Endothelial cell of umbilical vein (primary cell): ENCODE measurements at regions of chr17 and their contacts with region 1.

Region 1: DNA sequence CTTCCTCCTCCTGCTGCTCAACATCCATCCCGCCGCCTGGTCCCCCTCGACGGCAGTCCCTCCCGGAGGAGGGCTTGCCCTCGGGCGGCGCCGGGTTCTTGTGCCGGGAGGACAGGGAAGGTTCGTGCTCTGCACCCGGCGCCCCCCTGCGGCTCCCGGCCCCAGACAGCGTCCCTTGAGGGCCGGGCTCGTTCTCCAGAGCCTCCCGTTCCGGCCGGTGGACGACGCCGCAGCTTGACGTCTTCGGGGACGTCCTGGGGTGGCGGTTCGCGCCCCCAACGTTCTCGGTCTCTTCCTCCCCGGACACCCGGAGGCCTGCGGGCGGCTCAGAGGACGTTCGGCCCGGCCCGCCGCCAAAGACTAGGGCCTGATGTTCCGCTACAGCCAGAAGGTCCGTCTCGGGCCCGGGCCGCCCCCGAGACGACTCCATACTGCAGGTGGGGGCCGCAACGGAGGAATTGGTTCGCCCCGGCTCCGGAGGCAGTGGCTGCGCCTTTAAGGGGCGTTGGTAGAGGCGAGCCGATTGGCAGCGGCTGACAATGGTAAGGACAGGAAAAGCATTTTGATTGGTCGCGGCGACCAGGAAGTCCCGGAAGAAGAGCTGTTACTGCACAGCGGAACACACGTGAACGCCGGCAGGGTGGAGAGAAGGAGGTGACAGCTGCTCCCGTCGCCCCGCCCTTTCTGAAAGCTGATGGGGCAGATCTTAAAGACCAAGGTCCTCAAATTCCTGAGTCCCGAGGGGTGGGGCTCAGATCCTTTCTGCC is at the start of gene BORCS6:
- DNase-seq: peak; percentile 98
- H3K4me3 ChIP-seq: peak within 1 kb of the TSS; percentile 45 to 66 (median 49)
- H3K27ac ChIP-seq: peak within 1 kb of the TSS; percentile 65
- H3K4me1 ChIP-seq: peaks cover 27% of the 10 kb centered on the region
- H3K27me3 ChIP-seq: no peaks in the 10 kb centered on the region
- CTCF ChIP-seq: peak in 1 of 2 donors; percentile 5
- POLR2A ChIP-seq: no peak
- total RNA-seq, gene BORCS6: 8.3 and 9.0 TPM in 2 replicates

Region 2: GRCh38 chr17:8138672-8139371 is 51.1 kb before region 1 on chr17:
- CTCF ChIA-PET with region 1: interaction called, 3 read pairs
- POLR2A ChIA-PET with region 1: no interaction called
- dilution Hi-C with region 1: no loop called
- intact Hi-C with region 1: loop called (anchors 1 kb)
- DNase-seq: peak; percentile 98
- H3K4me3 ChIP-seq: peak overlapping the region; percentile 26 to 89 (median 80)
- H3K27ac ChIP-seq: peak overlapping the region; percentile 88
- H3K4me1 ChIP-seq: peaks cover 14% of the 10 kb centered on the region
- H3K27me3 ChIP-seq: no peaks in the 10 kb centered on the region
- CTCF ChIP-seq: peak; percentile 83 to 91
- POLR2A ChIP-seq: no peak

Region 3: DNA sequence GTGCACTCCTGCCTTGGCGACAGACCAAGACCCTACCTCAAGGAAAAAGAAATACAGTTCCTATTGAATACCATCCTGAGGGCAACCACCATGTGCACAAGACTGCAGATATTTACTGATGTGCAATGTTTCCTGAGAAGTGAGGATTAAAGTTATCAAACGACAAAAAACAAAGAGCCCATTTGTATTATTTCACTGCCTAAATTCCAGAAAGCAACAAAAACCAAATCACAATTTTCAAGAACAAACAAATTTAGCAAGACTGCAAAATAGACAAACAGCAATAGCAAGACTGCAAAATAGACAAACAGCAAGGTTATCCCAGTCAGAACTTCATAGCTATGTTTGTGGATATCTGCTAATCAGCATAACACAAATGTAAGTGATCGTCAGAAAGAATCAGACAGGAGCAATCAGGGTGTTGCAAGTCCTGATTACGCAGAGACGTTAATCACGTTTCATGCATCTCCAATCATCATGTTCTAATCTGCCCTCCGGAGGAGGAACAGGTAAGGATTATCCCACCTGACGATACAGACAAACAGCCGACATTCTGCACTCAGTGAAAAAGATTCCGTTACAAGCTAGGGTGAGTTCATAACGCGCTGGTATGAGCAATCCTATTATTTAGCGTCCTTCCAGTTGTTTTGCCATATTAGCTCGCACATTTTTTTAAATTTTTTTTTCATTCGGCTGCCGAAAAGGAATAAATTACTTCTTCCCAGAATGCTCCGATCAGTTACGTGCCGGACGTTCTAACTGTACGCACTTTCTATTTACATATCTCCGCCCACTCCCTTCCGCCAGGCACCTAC is 16.6 kb before region 1 on chr17:
- CTCF ChIA-PET with region 1: interaction called, 3 read pairs
- POLR2A ChIA-PET with region 1: interaction called, 17 read pairs
- dilution Hi-C with region 1: no loop called
- intact Hi-C with region 1: loop called (anchors 1 kb)
- DNase-seq: peak; percentile 95
- H3K4me3 ChIP-seq: peak overlapping the region in 2 of 3 experiments; percentile 37 to 68
- H3K27ac ChIP-seq: peak overlapping the region; percentile 95
- H3K4me1 ChIP-seq: peaks cover 23% of the 10 kb centered on the region
- H3K27me3 ChIP-seq: no peaks in the 10 kb centered on the region
- CTCF ChIP-seq: no peak
- POLR2A ChIP-seq: peak; percentile 100

Region 4: DNA sequence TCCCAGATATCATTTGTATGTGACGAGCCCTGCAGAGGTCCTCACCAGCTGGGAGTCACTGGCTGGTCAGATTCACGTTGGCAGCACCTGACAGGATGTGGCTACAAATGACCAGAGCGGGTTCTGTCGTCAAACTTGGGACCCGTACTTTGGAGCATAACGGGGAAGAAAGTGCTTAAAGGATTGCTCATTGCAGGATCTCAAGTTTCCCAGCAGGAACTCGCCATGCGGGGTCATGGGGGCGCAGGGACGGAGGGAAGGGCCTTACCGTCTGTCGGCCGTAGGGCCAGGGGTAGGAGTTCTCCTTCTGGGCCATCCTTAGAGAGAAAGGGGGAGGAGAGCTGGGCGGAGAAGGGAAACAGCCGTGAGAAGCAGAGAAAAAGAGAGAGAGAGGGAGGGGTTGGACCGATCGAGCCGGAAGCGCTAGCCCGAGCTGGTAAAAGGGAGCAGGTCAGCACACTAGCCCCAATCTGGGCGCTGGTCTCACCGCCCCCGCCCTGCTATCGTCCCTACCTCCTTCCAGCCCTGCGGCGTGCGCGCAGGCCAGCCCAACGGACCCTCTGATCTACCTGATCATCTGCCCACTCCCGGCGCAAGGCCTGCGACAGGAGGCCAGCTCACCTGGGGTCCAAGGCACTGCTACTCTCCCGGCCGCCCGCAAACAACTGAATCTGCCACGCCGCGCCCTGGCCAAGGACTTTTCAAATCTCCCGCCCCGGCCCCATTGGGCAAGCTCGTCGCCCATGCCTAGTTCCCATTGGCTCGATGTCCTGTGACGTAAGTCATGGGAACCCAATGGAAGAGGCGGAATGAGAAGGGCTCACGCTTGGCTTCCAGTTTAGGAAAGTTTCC is 20.2 kb after region 1 on chr17 and contains the start of gene AURKB:
- CTCF ChIA-PET with region 1: interaction called, 5 read pairs
- POLR2A ChIA-PET with region 1: interaction called, 6 read pairs
- dilution Hi-C with region 1: no loop called
- intact Hi-C with region 1: loop called (anchors 1 kb)
- DNase-seq: peak; percentile 94
- H3K4me3 ChIP-seq: peak within 1 kb of the TSS; percentile 39 to 78 (median 77)
- H3K27ac ChIP-seq: peak within 1 kb of the TSS; percentile 62
- H3K4me1 ChIP-seq: peaks cover 13% of the 10 kb centered on the region
- H3K27me3 ChIP-seq: no peaks in the 10 kb centered on the region
- CTCF ChIP-seq: no peak
- POLR2A ChIP-seq: peak; percentile 73
- total RNA-seq, gene AURKB: 104 and 107 TPM in 2 replicates

Region 5: GRCh38 chr17:8248751-8249607 is 59.1 kb after region 1 on chr17 and contains the start of gene PFAS:
- CTCF ChIA-PET with region 1: interaction called, 3 read pairs
- POLR2A ChIA-PET with region 1: interaction called, 4 read pairs
- dilution Hi-C with region 1: no loop called
- intact Hi-C with region 1: loop called (anchors 1 kb)
- DNase-seq: peak; percentile 90
- H3K4me3 ChIP-seq: peak within 1 kb of the TSS; percentile 69 to 98 (median 80)
- H3K27ac ChIP-seq: peak within 1 kb of the TSS; percentile 73
- H3K4me1 ChIP-seq: peaks cover 14% of the 10 kb centered on the region
- H3K27me3 ChIP-seq: no peaks in the 10 kb centered on the region
- CTCF ChIP-seq: peak in 1 of 2 donors; percentile 6
- POLR2A ChIP-seq: peak; percentile 79
- total RNA-seq, gene PFAS: 84.1 and 108 TPM in 2 replicates